CD4-positive, alpha-beta T cell (primary cell): ENCODE measurements at regions of chr19 and their contacts with region 1.

Region 1: DNA sequence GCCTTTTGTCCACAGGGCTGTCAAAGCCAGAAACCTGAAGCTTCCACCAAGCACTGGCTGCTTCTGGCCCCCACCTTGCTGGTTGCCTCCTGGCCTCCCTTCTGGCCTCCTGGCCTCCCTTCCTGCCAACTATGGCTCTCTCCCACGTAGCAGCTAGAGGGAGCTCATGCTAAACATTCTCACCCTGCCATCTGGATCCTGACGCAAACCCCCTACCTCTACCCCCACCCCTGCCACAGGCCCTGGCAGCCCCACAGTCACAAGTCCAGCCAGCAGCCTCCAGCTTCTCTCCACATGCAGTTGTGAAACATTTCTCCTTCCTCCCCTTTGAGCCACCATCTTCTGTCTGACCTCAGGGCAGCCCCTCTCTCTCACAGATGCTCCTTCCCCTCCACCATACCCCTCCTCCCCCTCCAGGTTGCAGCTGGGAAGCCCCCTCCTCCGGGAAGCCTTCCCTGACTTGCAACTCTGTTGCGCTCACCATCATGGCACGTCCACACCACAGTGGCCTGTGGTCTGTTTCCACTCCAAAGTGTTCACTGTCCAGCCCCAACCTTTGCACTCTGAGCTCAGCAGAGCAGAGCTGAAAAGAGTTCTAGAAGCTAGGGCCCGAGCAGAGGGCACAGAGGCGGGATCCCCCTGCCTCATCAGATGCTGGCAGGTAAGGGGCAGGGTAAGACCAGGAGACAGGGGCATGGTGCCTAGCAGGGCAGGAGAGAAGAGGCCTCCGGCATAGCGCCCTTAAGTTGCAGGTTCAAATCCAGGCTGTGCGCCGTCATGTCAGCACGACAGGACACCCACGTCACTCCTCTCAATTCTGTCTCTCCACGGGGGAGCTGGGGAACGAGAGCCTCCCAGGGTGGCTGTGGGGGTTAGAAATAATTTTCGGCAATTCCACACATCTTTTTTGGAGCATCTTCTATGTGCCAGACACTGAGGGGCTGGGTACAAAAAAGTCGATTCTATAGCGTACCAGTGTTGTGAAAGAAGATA is 7.3 kb downstream of the ADGRL1 start:
- DNase-seq: no peak
- ATAC-seq: no peak
- H3K4me3 ChIP-seq: no peak overlapping the region
- H3K4me3 Mint-ChIP-seq: no peak overlapping the region
- H3K27ac ChIP-seq: no peak overlapping the region
- H3K27ac Mint-ChIP-seq: no peak overlapping the region
- H3K4me1 ChIP-seq: peaks cover 20% of the 10 kb centered on the region
- H3K4me1 Mint-ChIP-seq: peaks cover 32% of the 10 kb centered on the region
- H3K27me3 ChIP-seq: no peaks in the 10 kb centered on the region
- H3K27me3 Mint-ChIP-seq: no peaks in the 10 kb centered on the region
- CTCF ChIP-seq: no peak

Region 2: DNA sequence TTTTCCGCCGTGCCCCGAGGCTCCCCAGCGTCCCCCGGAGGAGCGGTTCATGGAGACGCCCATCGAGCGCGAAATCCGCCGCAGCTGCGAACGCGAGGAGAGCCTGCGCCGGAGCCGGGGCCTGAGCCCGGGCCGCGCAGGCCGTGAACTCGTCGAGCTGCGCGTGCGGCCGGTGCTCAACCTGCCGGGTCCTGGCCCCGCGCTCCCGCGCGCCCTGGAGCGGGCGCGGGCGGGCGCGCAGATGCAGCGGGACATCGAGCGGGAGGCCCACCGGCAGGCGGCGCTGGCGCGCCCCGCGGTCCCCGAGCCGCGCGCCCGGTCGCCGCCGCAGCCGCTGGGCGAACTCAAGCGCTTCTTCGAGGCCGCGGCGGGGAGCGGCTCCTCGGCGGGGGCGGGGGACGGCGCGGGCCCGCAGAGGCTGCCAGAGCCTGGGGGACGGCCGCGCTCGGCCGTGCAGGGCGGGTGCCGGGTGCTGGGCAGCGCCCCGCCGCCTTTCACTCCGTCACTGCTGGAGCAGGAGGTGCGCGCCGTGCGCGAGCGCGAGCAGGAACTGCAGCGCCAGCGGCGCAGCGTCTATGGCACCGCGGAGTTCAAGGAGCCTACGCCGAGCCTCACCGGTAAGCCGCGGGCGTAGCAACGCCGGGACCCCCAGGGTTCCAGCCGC is 125.3 kb before region 1 on chr19:
- CTCF ChIA-PET with region 1: no interaction called
- POLR2A ChIA-PET with region 1: no interaction called
- intact Hi-C with region 1: no loop called
- DNase-seq: peak; percentile 55 to 92 (median 72)
- ATAC-seq: peak; percentile 79
- H3K4me3 ChIP-seq: peak overlapping the region; percentile 77
- H3K4me3 Mint-ChIP-seq: peak overlapping the region; percentile 93
- H3K27ac ChIP-seq: no peak overlapping the region
- H3K27ac Mint-ChIP-seq: peak overlapping the region; percentile 83
- H3K4me1 ChIP-seq: peaks cover 38% of the 10 kb centered on the region
- H3K4me1 Mint-ChIP-seq: peaks cover 17% of the 10 kb centered on the region
- H3K27me3 ChIP-seq: peaks cover 4 to 5% of the 10 kb centered on the region in 2 experiments
- H3K27me3 Mint-ChIP-seq: peaks cover 4% of the 10 kb centered on the region
- CTCF ChIP-seq: no peak

Region 3: GRCh38 chr19:14147797-14148605 is 50.7 kb before region 1 on chr19:
- CTCF ChIA-PET with region 1: interaction called, 3 read pairs
- POLR2A ChIA-PET with region 1: no interaction called
- intact Hi-C with region 1: loop called in 1 of 2 experiments (anchors 5 kb)
- DNase-seq: peak; percentile 36 to 75 (median 53)
- ATAC-seq: peak; percentile 55
- H3K4me3 ChIP-seq: no peak overlapping the region
- H3K4me3 Mint-ChIP-seq: peak overlapping the region; percentile 57
- H3K27ac ChIP-seq: peak overlapping the region; percentile 84 to 94
- H3K27ac Mint-ChIP-seq: peak overlapping the region; percentile 99
- H3K4me1 ChIP-seq: peaks cover 40% of the 10 kb centered on the region
- H3K4me1 Mint-ChIP-seq: peaks cover 41% of the 10 kb centered on the region
- H3K27me3 ChIP-seq: no peaks in the 10 kb centered on the region
- H3K27me3 Mint-ChIP-seq: no peaks in the 10 kb centered on the region
- CTCF ChIP-seq: peak; percentile 70

Region 4: GRCh38 chr19:14405758-14406644 is 207.3 kb after region 1 on chr19:
- CTCF ChIA-PET with region 1: no interaction called
- POLR2A ChIA-PET with region 1: no interaction called
- intact Hi-C with region 1: loop called (anchors 2 kb)
- DNase-seq: peak; percentile 78 to 95 (median 86)
- ATAC-seq: peak; percentile 73
- H3K4me3 ChIP-seq: no peak overlapping the region
- H3K4me3 Mint-ChIP-seq: peak overlapping the region; percentile 69
- H3K27ac ChIP-seq: peak overlapping the region; percentile 22 to 56
- H3K27ac Mint-ChIP-seq: peak overlapping the region; percentile 92
- H3K4me1 ChIP-seq: peaks cover 66% of the 10 kb centered on the region
- H3K4me1 Mint-ChIP-seq: peaks cover 29% of the 10 kb centered on the region
- H3K27me3 ChIP-seq: no peaks in the 10 kb centered on the region
- H3K27me3 Mint-ChIP-seq: no peaks in the 10 kb centered on the region
- CTCF ChIP-seq: peak; percentile 85

Region 5: DNA sequence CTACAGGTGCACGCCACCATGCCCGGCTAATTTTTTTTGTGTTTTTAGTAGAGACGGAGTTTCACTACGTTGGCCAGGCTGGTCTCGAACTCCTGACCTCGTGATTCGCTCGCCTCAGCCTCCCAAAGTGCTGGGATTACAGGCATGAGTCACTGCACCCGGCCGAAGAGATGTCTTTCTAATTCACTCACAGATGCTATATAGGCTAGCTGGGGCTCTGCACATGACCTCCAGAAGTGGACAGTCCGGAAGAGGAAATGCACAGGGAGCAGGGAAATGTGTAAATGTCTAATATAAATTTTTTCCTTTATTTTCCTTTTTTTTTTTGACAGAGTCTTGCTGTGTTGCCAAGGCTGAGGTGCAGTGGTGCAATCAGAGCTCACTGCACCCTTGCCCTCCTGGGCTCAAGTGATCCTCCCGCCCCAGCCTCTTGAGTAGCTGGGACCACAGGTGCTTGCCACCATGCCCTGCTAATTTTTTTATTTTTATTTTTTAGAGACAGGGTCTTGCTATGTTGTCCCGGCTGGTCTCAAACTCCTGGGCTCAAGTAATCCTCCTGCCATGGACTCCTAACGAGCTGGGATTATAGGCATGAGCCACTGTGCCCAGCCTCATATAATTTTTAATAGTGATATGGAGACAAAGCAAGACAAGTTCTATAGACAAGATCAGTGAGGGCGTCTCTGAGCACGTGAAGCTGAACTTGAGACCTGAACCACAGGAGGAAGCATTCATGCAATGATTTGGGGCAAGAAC is 288.9 kb after region 1 on chr19:
- CTCF ChIA-PET with region 1: no interaction called
- POLR2A ChIA-PET with region 1: no interaction called
- intact Hi-C with region 1: loop called in 1 of 2 experiments (anchors 5 kb)
- DNase-seq: no peak
- ATAC-seq: no peak
- H3K4me3 ChIP-seq: no peak overlapping the region
- H3K4me3 Mint-ChIP-seq: no peak overlapping the region
- H3K27ac ChIP-seq: no peak overlapping the region
- H3K27ac Mint-ChIP-seq: no peak overlapping the region
- H3K4me1 ChIP-seq: peaks cover 5% of the 10 kb centered on the region
- H3K4me1 Mint-ChIP-seq: peaks cover 7% of the 10 kb centered on the region
- H3K27me3 ChIP-seq: no peaks in the 10 kb centered on the region
- H3K27me3 Mint-ChIP-seq: no peaks in the 10 kb centered on the region
- CTCF ChIP-seq: no peak